Activated T-helper 1 cell treated with anti-CD3 and anti-CD28 coated beads, Interleukin-12 subunit alpha, Interleukin-12 subunit beta, Interleukin-2, Interleukin-4 antibody, amounts not matched to agents 30 ng/mL and 10 ng/mL and 1 ng/mL, durations not matched to agents 14 hours and 24 hours and 36 hours (primary cell): ENCODE measurements at regions of chr11 and their contacts with region 1.

Region 1: DNA sequence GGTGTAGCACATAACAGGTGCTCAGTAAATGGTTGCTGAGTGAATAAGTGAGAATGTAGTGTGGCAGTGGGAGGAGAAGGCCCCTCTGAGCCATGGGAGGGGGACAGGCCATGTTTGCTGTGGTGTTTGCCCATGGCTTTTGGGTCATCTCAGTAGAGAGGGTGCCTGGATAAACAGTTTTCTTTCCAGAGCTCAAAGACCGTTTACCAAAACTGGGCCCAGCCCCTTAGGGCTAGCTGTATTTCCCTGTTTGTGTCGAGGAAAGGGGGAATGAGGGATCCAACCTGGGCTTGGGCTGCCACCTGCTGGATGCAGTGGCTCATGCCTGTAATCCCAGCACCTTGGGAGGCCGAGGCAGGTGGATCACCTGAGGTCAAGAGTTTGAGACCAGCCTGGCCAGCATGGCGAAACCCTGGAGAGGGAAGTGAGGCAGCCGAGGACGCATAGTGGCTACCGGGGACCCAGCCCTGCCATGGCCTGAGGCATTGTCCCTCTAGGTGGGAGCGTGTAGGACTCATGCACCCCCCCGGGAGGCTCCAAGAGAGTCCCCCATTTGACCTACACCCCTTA is 8.7 kb upstream of the LTO1 start:
- DNase-seq: no peak
- H3K4me3 Mint-ChIP-seq: no peak overlapping the region
- H3K27ac Mint-ChIP-seq: no peak overlapping the region
- H3K4me1 Mint-ChIP-seq: peaks cover 17% of the 10 kb centered on the region
- H3K27me3 Mint-ChIP-seq: peaks cover 8% of the 10 kb centered on the region

Region 2: GRCh38 chr11:69801519-69802335 is 117.9 kb after region 1 on chr11:
- intact Hi-C with region 1: loop called (anchors 1 kb)
- DNase-seq: no peak
- H3K4me3 Mint-ChIP-seq: no peak overlapping the region
- H3K27ac Mint-ChIP-seq: no peak overlapping the region
- H3K4me1 Mint-ChIP-seq: no peaks in the 10 kb centered on the region
- H3K27me3 Mint-ChIP-seq: no peaks in the 10 kb centered on the region

Region 3: GRCh38 chr11:69841859-69842698 is 158.2 kb after region 1 on chr11:
- intact Hi-C with region 1: loop called (anchors 1 kb)
- DNase-seq: no peak
- H3K4me3 Mint-ChIP-seq: no peak overlapping the region
- H3K27ac Mint-ChIP-seq: no peak overlapping the region
- H3K4me1 Mint-ChIP-seq: no peaks in the 10 kb centered on the region
- H3K27me3 Mint-ChIP-seq: peaks cover 2% of the 10 kb centered on the region

Region 4: GRCh38 chr11:69888483-69889076 is 204.7 kb after region 1 on chr11:
- intact Hi-C with region 1: loop called (anchors 1 kb)
- DNase-seq: peak; percentile 39
- H3K4me3 Mint-ChIP-seq: no peak overlapping the region
- H3K27ac Mint-ChIP-seq: no peak overlapping the region
- H3K4me1 Mint-ChIP-seq: no peaks in the 10 kb centered on the region
- H3K27me3 Mint-ChIP-seq: peaks cover 7% of the 10 kb centered on the region

Region 5: GRCh38 chr11:70005107-70005818 is 321.4 kb after region 1 on chr11:
- intact Hi-C with region 1: loop called (anchors 10 kb)
- DNase-seq: no peak
- H3K4me3 Mint-ChIP-seq: no peak overlapping the region
- H3K27ac Mint-ChIP-seq: no peak overlapping the region
- H3K4me1 Mint-ChIP-seq: peaks cover 14% of the 10 kb centered on the region
- H3K27me3 Mint-ChIP-seq: no peaks in the 10 kb centered on the region

Region 6: DNA sequence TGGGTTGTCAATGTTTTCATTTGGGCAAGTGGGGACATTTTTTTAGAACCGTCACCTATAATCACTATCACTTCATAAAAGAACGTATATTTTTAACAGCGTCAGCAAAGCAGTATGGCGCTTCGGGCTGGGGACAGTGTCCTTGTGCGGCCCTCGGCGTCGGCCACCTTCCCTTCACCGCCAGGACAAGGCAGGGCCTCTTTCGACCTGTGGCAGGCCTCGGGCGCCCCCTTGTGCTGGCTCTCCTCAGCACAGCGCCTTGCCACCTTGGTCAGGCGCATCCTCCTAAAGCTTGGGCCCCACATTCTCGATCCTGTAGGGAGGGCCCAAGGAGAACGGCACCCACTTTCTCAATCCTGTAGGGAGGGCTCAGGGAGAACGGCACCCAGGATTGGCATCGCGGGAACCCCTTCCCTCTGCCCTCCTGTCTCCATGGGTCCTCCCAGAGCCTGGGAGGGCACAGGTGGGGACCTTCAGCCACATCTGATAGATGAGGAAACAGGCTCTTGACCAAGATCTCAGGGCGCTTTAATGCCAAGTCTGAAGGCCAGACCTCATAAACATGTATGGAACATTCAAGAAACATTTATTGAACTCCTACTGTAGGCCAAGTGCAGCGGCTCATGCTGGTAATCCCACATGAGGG is 507.8 kb after region 1 on chr11:
- intact Hi-C with region 1: loop called (anchors 2 kb)
- DNase-seq: peak; percentile 50
- H3K4me3 Mint-ChIP-seq: no peak overlapping the region
- H3K27ac Mint-ChIP-seq: no peak overlapping the region
- H3K4me1 Mint-ChIP-seq: peaks cover 5% of the 10 kb centered on the region
- H3K27me3 Mint-ChIP-seq: peaks cover 3% of the 10 kb centered on the region